ENCODE measurements at regions of chr5 and their contacts with region 1.

Region 1: GRCh38 chr5:75511435-75512384 is at the starts of genes CERT1 and POLK:
- DNase-seq: peak; percentile 70 to 94 (median 90)
- ATAC-seq: peak; percentile 95
- H3K4me3 ChIP-seq: peak within 1 kb of the TSS; percentile 78
- H3K4me3 Mint-ChIP-seq: peak within 1 kb of the TSS; percentile 89 to 97 (median 94)
- H3K27ac ChIP-seq: peak within 1 kb of the TSS; percentile 75
- H3K27ac Mint-ChIP-seq: peak within 1 kb of the TSS; percentile 84 to 98 (median 93)
- H3K4me1 ChIP-seq: peaks cover 14 to 28% of the 10 kb centered on the region in 2 donors
- H3K4me1 Mint-ChIP-seq: peaks cover 29 to 77% (median 54%) of the 10 kb centered on the region in 7 donors
- H3K27me3 ChIP-seq: no peaks in the 10 kb centered on the region
- H3K27me3 Mint-ChIP-seq: no peaks in the 10 kb centered on the region
- total RNA-seq, gene CERT1: 34.4 to 60.4 (median 39.3) TPM
- total RNA-seq, gene POLK: 20.6 to 36.6 (median 24.9) TPM

Region 2: GRCh38 chr5:74865804-74866595 is 645.7 kb before region 1 on chr5 and contains the start of gene FAM169A:
- CTCF ChIA-PET with region 1: no interaction called
- POLR2A ChIA-PET with region 1: no interaction called
- intact Hi-C with region 1: loop called in 1 of 2 experiments (anchors 1 kb)
- DNase-seq: peak; percentile 40 to 71 (median 61)
- ATAC-seq: peak; percentile 81
- H3K4me3 ChIP-seq: peak within 1 kb of the TSS; percentile 69
- H3K4me3 Mint-ChIP-seq: peak within 1 kb of the TSS; percentile 87 to 99 (median 97)
- H3K27ac ChIP-seq: peak within 1 kb of the TSS; percentile 78
- H3K27ac Mint-ChIP-seq: peak within 1 kb of the TSS; percentile 79 to 97 (median 95)
- H3K4me1 ChIP-seq: peaks cover 4 to 8% of the 10 kb centered on the region in 2 donors
- H3K4me1 Mint-ChIP-seq: peaks cover 7 to 49% (median 42%) of the 10 kb centered on the region in 7 donors
- H3K27me3 ChIP-seq: no peaks in the 10 kb centered on the region
- H3K27me3 Mint-ChIP-seq: peaks cover 0 to 26% (median 0%) of the 10 kb centered on the region in 5 donors
- total RNA-seq, gene FAM169A: 2.3 to 22.4 (median 15.6) TPM

Region 3: GRCh38 chr5:75336625-75337339 is 174.9 kb before region 1 on chr5 and contains the start of gene HMGCR:
- CTCF ChIA-PET with region 1: no interaction called
- POLR2A ChIA-PET with region 1: interaction called, 6 read pairs
- intact Hi-C with region 1: loop called (anchors 1 kb)
- DNase-seq: peak; percentile 82 to 97 (median 95)
- ATAC-seq: peak; percentile 96
- H3K4me3 ChIP-seq: peak within 1 kb of the TSS; percentile 85
- H3K4me3 Mint-ChIP-seq: no peak within 1 kb of the TSS
- H3K27ac ChIP-seq: peak within 1 kb of the TSS; percentile 83
- H3K27ac Mint-ChIP-seq: no peak within 1 kb of the TSS
- H3K4me1 ChIP-seq: peaks cover 8 to 10% of the 10 kb centered on the region in 2 donors
- H3K4me1 Mint-ChIP-seq: peaks cover 18 to 41% (median 37%) of the 10 kb centered on the region in 7 donors
- H3K27me3 ChIP-seq: no peaks in the 10 kb centered on the region
- H3K27me3 Mint-ChIP-seq: no peaks in the 10 kb centered on the region
- total RNA-seq, gene HMGCR: 38.8 to 57.3 (median 43.8) TPM

Region 4: DNA sequence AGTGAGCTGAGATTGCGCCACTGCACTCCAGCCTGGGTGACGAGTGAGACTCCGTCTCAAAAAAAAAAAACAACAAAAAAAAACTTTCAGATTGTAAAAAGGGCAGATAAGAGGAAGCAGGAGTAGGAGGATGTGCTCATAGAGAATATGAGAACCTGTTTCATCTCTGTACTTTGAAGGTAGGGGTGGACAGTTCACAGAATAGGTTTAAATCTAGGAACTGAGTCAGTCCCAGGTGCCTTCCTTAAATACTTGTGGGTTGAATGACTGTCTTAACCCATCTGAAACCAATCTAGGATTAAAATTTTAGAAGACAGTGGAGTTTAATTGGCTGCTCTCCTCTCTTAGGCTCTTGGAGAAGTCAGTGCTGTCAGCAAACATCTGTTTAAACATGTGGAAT is 12.4 kb after region 1 on chr5:
- CTCF ChIA-PET with region 1: no interaction called
- POLR2A ChIA-PET with region 1: interaction called, 4 read pairs
- intact Hi-C with region 1: loop called in 1 of 2 experiments (anchors 2 kb)
- DNase-seq: peak in 3 of 9 donors; percentile 3 to 10 (median 3)
- ATAC-seq: peak; percentile 50
- H3K4me3 ChIP-seq: no peak overlapping the region
- H3K4me3 Mint-ChIP-seq: peak overlapping the region in 5 of 10 donors; percentile 12 to 52 (median 38)
- H3K27ac ChIP-seq: no peak overlapping the region
- H3K27ac Mint-ChIP-seq: peak overlapping the region in 7 of 9 donors; percentile 17 to 61 (median 51)
- H3K4me1 ChIP-seq: peaks cover 0 to 9% of the 10 kb centered on the region in 2 donors
- H3K4me1 Mint-ChIP-seq: peaks cover 24 to 52% (median 45%) of the 10 kb centered on the region in 7 donors
- H3K27me3 ChIP-seq: no peaks in the 10 kb centered on the region
- H3K27me3 Mint-ChIP-seq: no peaks in the 10 kb centered on the region

Region 5: GRCh38 chr5:75640395-75640794 is 128.7 kb after region 1 on chr5:
- CTCF ChIA-PET with region 1: no interaction called
- POLR2A ChIA-PET with region 1: no interaction called
- intact Hi-C with region 1: no loop called
- DNase-seq: no peak
- ATAC-seq: no peak
- H3K4me3 ChIP-seq: no peak overlapping the region
- H3K4me3 Mint-ChIP-seq: no peak overlapping the region
- H3K27ac ChIP-seq: no peak overlapping the region
- H3K27ac Mint-ChIP-seq: no peak overlapping the region
- H3K4me1 ChIP-seq: no peaks in the 10 kb centered on the region
- H3K4me1 Mint-ChIP-seq: no peaks in the 10 kb centered on the region
- H3K27me3 ChIP-seq: no peaks in the 10 kb centered on the region
- H3K27me3 Mint-ChIP-seq: no peaks in the 10 kb centered on the region

Region 6: GRCh38 chr5:75681125-75681830 is 169.6 kb after region 1 on chr5:
- CTCF ChIA-PET with region 1: no interaction called
- POLR2A ChIA-PET with region 1: interaction called, 3 read pairs
- intact Hi-C with region 1: loop called (anchors 1 to 2 kb)
- DNase-seq: peak in 4 of 9 donors; percentile 24 to 46 (median 38)
- ATAC-seq: peak; percentile 66
- H3K4me3 ChIP-seq: no peak overlapping the region
- H3K4me3 Mint-ChIP-seq: no peak overlapping the region
- H3K27ac ChIP-seq: no peak overlapping the region
- H3K27ac Mint-ChIP-seq: no peak overlapping the region
- H3K4me1 ChIP-seq: peaks cover 0 to 3% of the 10 kb centered on the region in 2 donors
- H3K4me1 Mint-ChIP-seq: peaks cover 7 to 27% (median 18%) of the 10 kb centered on the region in 7 donors
- H3K27me3 ChIP-seq: no peaks in the 10 kb centered on the region
- H3K27me3 Mint-ChIP-seq: no peaks in the 10 kb centered on the region

Measured in naive thymus-derived CD4-positive, alpha-beta T cell (primary cell).